B cell (primary cell): ENCODE measurements at regions of chr12 and their contacts with region 1.

Region 1: GRCh38 chr12:11067514-11067913 is 5.4 kb upstream of the TAS2R46 start:
- DNase-seq: no peak
- ATAC-seq: no peak
- H3K4me3 ChIP-seq: no peak overlapping the region
- H3K4me3 Mint-ChIP-seq: no peak overlapping the region
- H3K27ac ChIP-seq: no peak overlapping the region
- H3K27ac Mint-ChIP-seq: no peak overlapping the region
- H3K4me1 ChIP-seq: peaks cover 0 to 4% of the 10 kb centered on the region in 2 donors
- H3K4me1 Mint-ChIP-seq: peaks cover 18% of the 10 kb centered on the region
- H3K27me3 ChIP-seq: no peaks in the 10 kb centered on the region
- H3K27me3 Mint-ChIP-seq: no peaks in the 10 kb centered on the region
- CTCF ChIP-seq: no peak

Region 2: DNA sequence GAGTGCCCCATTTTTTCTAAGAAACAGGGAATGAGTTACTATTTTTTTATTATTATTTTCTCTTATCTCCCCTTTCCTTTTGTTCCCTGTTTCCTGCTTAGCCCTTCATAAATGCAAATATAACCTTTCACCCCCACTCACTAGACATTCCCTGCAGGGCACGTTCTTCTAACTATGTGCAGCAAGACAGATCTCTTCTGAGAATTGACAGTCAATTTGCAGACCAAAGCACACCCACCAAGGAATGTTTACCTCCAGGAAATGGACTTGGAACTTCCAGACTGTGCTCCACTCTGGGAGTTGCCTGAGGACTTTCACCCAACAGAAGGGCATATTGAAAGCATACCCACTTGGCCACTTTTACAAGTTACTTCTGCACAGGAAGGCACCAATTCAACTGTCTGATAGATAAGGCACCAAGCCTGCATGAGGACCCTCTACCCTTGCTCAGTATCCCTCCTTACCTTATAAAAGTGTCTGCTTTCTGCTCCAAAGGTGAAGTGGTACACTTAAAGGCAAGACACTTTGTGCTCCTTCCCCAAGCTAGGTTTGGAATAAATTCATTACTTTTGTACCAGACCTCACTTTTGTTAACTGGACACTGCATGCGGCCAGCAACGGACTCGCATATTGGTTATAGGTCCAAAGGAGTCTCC is 51.6 kb before region 1 on chr12:
- CTCF ChIA-PET with region 1: no interaction called
- POLR2A ChIA-PET with region 1: no interaction called
- intact Hi-C with region 1: loop called (anchors 1 kb)
- DNase-seq: no peak
- ATAC-seq: no peak
- H3K4me3 ChIP-seq: no peak overlapping the region
- H3K4me3 Mint-ChIP-seq: no peak overlapping the region
- H3K27ac ChIP-seq: no peak overlapping the region
- H3K27ac Mint-ChIP-seq: no peak overlapping the region
- H3K4me1 ChIP-seq: no peaks in the 10 kb centered on the region
- H3K4me1 Mint-ChIP-seq: peaks cover 2% of the 10 kb centered on the region
- H3K27me3 ChIP-seq: no peaks in the 10 kb centered on the region
- H3K27me3 Mint-ChIP-seq: no peaks in the 10 kb centered on the region
- CTCF ChIP-seq: no peak

Region 3: DNA sequence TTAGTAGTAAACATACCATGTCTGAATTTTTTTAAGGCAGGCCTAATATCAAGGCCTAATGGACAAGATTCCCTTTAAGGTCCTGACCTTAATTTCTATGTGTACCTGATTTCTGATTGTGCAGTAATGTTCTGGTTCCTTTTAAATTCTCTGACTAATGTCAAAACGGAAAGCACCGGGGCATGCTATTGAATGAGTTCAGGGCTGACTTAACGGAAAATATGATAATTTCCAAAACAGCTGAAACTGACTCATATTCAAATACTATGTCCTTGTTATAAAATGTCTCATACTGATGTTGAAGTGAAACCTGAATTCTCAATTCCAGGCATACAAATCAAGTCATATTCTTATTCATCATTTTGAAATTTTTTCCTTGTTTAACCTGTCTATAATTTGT is 17.9 kb after region 1 on chr12:
- CTCF ChIA-PET with region 1: interaction called, 4 read pairs
- POLR2A ChIA-PET with region 1: no interaction called
- intact Hi-C with region 1: loop called (anchors 2 kb)
- DNase-seq: peak; percentile 22
- ATAC-seq: peak; percentile 45
- H3K4me3 ChIP-seq: no peak overlapping the region
- H3K4me3 Mint-ChIP-seq: no peak overlapping the region
- H3K27ac ChIP-seq: peak overlapping the region in 1 of 2 donors; percentile 4
- H3K27ac Mint-ChIP-seq: peak overlapping the region; percentile 41
- H3K4me1 ChIP-seq: peaks cover 4% of the 10 kb centered on the region in 2 donors
- H3K4me1 Mint-ChIP-seq: peaks cover 9% of the 10 kb centered on the region
- H3K27me3 ChIP-seq: no peaks in the 10 kb centered on the region
- H3K27me3 Mint-ChIP-seq: no peaks in the 10 kb centered on the region
- CTCF ChIP-seq: no peak